BJ (cell line): ENCODE measurements at regions of chr1 and their contacts with region 1.

Region 1: GRCh38 chr1:167059045-167059808 is 30.9 kb downstream of the GPA33 start:
- DNase-seq: no peak
- H3K4me3 ChIP-seq: no peak overlapping the region
- H3K27me3 ChIP-seq: no peaks in the 10 kb centered on the region
- CTCF ChIP-seq: peak; percentile 90

Region 2: GRCh38 chr1:166884040-166884642 is 175.1 kb before region 1 on chr1:
- CTCF ChIA-PET with region 1: interaction called, 73 read pairs
- POLR2A ChIA-PET with region 1: no interaction called
- DNase-seq: no peak
- H3K4me3 ChIP-seq: no peak overlapping the region
- H3K27me3 ChIP-seq: peaks cover 8% of the 10 kb centered on the region
- CTCF ChIP-seq: peak; percentile 65

Region 3: GRCh38 chr1:166889776-166890175 is 169.5 kb before region 1 on chr1:
- CTCF ChIA-PET with region 1: interaction called, 73 read pairs
- POLR2A ChIA-PET with region 1: no interaction called
- DNase-seq: no peak
- H3K4me3 ChIP-seq: no peak overlapping the region
- H3K27me3 ChIP-seq: peaks cover 5% of the 10 kb centered on the region
- CTCF ChIP-seq: no peak

Region 4: GRCh38 chr1:167542109-167543032 is 483.1 kb after region 1 on chr1:
- CTCF ChIA-PET with region 1: interaction called, 14 read pairs
- POLR2A ChIA-PET with region 1: no interaction called
- DNase-seq: no peak
- H3K4me3 ChIP-seq: no peak overlapping the region
- H3K27me3 ChIP-seq: no peaks in the 10 kb centered on the region
- CTCF ChIP-seq: no peak

Region 5: GRCh38 chr1:167687919-167688519 is 628.8 kb after region 1 on chr1:
- CTCF ChIA-PET with region 1: no interaction called
- POLR2A ChIA-PET with region 1: no interaction called
- DNase-seq: no peak
- H3K4me3 ChIP-seq: no peak overlapping the region
- H3K27me3 ChIP-seq: peaks cover 4% of the 10 kb centered on the region
- CTCF ChIP-seq: peak; percentile 90